ENCODE measurements at regions of chr11 and their contacts with region 1.

Region 1: GRCh38 chr11:20337526-20338154 is 25.9 kb upstream of the HTATIP2 start:
- DNase-seq: peak; percentile 16
- H3K4me3 Mint-ChIP-seq: no peak overlapping the region
- H3K27ac Mint-ChIP-seq: no peak overlapping the region
- H3K4me1 Mint-ChIP-seq: no peaks in the 10 kb centered on the region
- H3K27me3 Mint-ChIP-seq: peaks cover 72% of the 10 kb centered on the region
- CTCF ChIP-seq: peak; percentile 12

Region 2: GRCh38 chr11:20197881-20198280 is 139.8 kb before region 1 on chr11:
- CTCF ChIA-PET with region 1: no interaction called
- intact Hi-C with region 1: no loop called
- DNase-seq: no peak
- H3K4me3 Mint-ChIP-seq: no peak overlapping the region
- H3K27ac Mint-ChIP-seq: no peak overlapping the region
- H3K4me1 Mint-ChIP-seq: no peaks in the 10 kb centered on the region
- H3K27me3 Mint-ChIP-seq: peaks cover 22% of the 10 kb centered on the region
- CTCF ChIP-seq: no peak

Region 3: DNA sequence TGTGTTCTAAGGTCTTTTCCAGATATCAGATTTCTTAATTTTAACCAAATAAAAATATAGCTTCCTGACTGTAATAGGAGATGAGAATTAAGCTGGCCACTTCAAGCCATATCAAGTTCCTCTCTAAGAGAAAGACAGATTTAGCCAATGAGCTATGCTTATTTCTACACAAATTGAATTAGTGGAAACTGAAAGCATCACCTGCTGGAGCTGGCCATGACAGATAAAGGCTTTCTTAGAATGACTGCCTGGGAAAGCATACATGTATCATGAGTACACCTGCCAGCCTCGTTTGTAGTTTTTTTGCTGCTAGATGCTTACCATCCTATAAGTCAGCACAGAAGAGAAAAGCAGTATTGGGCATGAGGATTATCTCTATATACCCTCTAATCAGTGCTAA is 123.8 kb before region 1 on chr11:
- CTCF ChIA-PET with region 1: no interaction called
- intact Hi-C with region 1: no loop called
- DNase-seq: no peak
- H3K4me3 Mint-ChIP-seq: no peak overlapping the region
- H3K27ac Mint-ChIP-seq: no peak overlapping the region
- H3K4me1 Mint-ChIP-seq: no peaks in the 10 kb centered on the region
- H3K27me3 Mint-ChIP-seq: peaks cover 26% of the 10 kb centered on the region
- CTCF ChIP-seq: no peak

Region 4: DNA sequence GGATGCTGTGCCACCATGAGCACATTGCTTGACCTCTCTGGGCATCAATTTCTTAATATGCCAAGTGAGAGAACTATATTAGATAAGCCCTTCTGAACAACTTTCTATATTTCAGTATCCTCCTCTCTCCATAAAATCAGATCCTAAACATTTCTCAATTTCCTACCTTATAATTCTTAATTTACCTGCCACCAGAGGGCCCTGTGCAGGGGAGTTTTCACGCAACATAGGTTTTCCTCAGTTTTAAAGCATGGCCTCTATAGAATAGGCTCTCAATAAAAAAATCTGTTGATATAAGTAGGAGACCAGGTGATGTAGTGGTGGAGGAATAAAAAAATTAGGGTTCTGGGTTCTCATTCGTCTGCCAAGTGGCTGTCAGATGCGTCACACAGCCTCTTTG is 93.7 kb before region 1 on chr11:
- CTCF ChIA-PET with region 1: no interaction called
- intact Hi-C with region 1: loop called (anchors 2 kb)
- DNase-seq: no peak
- H3K4me3 Mint-ChIP-seq: no peak overlapping the region
- H3K27ac Mint-ChIP-seq: no peak overlapping the region
- H3K4me1 Mint-ChIP-seq: no peaks in the 10 kb centered on the region
- H3K27me3 Mint-ChIP-seq: peaks cover 38% of the 10 kb centered on the region
- CTCF ChIP-seq: peak; percentile 17

Region 5: GRCh38 chr11:20451568-20451967 is 113.9 kb after region 1 on chr11:
- CTCF ChIA-PET with region 1: no interaction called
- intact Hi-C with region 1: no loop called
- DNase-seq: no peak
- H3K4me3 Mint-ChIP-seq: no peak overlapping the region
- H3K27ac Mint-ChIP-seq: no peak overlapping the region
- H3K4me1 Mint-ChIP-seq: no peaks in the 10 kb centered on the region
- H3K27me3 Mint-ChIP-seq: no peaks in the 10 kb centered on the region
- CTCF ChIP-seq: no peak